AG04450 (cell line): ENCODE measurements at regions of chr1 and their contacts with region 1.

Region 1: GRCh38 chr1:167797015-167797414 is 75.2 kb downstream of the MPZL1 start:
- DNase-seq: peak; percentile 93
- H3K4me3 ChIP-seq: no peak overlapping the region
- H3K27ac ChIP-seq: peak overlapping the region; percentile 86
- H3K27me3 ChIP-seq: no peaks in the 10 kb centered on the region
- CTCF ChIP-seq: no peak

Region 2: GRCh38 chr1:167770127-167770526 is 26.9 kb before region 1 on chr1:
- CTCF ChIA-PET with region 1: no interaction called
- POLR2A ChIA-PET with region 1: no interaction called
- DNase-seq: no peak
- H3K4me3 ChIP-seq: no peak overlapping the region
- H3K27ac ChIP-seq: no peak overlapping the region
- H3K27me3 ChIP-seq: no peaks in the 10 kb centered on the region
- CTCF ChIP-seq: no peak

Region 3: GRCh38 chr1:167936068-167936929 is 139.3 kb after region 1 on chr1 and contains the start of gene DCAF6:
- CTCF ChIA-PET with region 1: interaction called, 3 read pairs
- POLR2A ChIA-PET with region 1: interaction called, 31 read pairs
- DNase-seq: peak; percentile 96
- H3K4me3 ChIP-seq: peak within 1 kb of the TSS; percentile 93
- H3K27ac ChIP-seq: peak within 1 kb of the TSS; percentile 98
- H3K27me3 ChIP-seq: no peaks in the 10 kb centered on the region
- CTCF ChIP-seq: no peak
- polyA plus RNA-seq, gene DCAF6: 102 and 137 TPM in 2 replicates

Region 4: DNA sequence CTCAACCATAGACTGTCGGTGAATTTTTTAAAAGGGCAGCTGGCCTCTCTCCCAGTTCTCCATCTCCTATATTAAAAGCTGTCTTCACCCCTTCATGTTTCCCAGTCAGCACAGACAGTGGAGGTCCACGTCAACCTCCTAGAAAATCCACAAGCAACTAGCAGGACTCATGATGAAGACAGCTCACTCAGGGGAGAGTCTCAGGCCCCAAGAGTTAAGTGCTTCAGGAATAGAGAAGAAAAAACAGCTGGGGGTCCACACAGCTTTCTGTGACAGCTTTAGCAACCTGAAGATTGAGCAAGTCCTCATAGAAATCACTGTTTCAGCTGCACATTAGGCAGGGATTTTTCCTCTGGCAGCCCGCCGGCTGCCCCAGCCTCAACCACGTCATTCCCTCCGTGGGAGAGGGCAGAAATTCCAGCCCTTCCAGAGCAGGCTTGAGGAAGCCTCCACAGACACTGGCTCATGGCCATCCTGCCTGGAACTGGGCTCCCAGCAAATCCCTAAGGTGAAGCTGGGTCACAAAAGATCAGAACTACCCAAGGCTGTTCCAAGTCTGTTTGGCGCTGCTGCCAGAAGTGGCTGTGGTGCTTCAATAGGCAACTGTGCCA is 324.5 kb after region 1 on chr1:
- CTCF ChIA-PET with region 1: no interaction called
- POLR2A ChIA-PET with region 1: interaction called, 10 read pairs
- DNase-seq: peak; percentile 80
- H3K4me3 ChIP-seq: no peak overlapping the region
- H3K27ac ChIP-seq: peak overlapping the region; percentile 92
- H3K27me3 ChIP-seq: no peaks in the 10 kb centered on the region
- CTCF ChIP-seq: no peak